Heart right ventricle (tissue), 16 donors: ENCODE measurements at regions of chr5 and their contacts with region 1.

Region 1: GRCh38 chr5:9544502-9545135 is 1.3 kb downstream of the SEMA5A start:
- DNase-seq: peak; percentile 85 to 87
- ATAC-seq: peak; percentile 73 to 86 (median 80)
- H3K4me3 ChIP-seq: peak overlapping the region; percentile 45 to 90 (median 73)
- H3K27ac ChIP-seq: peak overlapping the region; percentile 14 to 96 (median 80)
- H3K4me1 ChIP-seq: peaks cover 0 to 54% (median 21%) of the 10 kb centered on the region in 9 donors
- H3K27me3 ChIP-seq: peaks cover 0 to 46% (median 12%) of the 10 kb centered on the region in 7 donors
- CTCF ChIP-seq: peak; percentile 74 to 90 (median 80)

Region 2: GRCh38 chr5:9284781-9285307 is 259.8 kb before region 1 on chr5:
- intact Hi-C with region 1: loop called in 6 of 10 experiments (anchors 5 to 10 kb)
- DNase-seq: peak in 1 of 2 donors; percentile 32
- ATAC-seq: peak; percentile 73 to 92 (median 88)
- H3K4me3 ChIP-seq: peak overlapping the region in 1 of 10 donors; percentile 3
- H3K27ac ChIP-seq: peak overlapping the region; percentile 12 to 82 (median 59)
- H3K4me1 ChIP-seq: peaks cover 0 to 34% (median 18%) of the 10 kb centered on the region in 9 donors
- H3K27me3 ChIP-seq: no peaks in the 10 kb centered on the region
- CTCF ChIP-seq: no peak

Region 3: DNA sequence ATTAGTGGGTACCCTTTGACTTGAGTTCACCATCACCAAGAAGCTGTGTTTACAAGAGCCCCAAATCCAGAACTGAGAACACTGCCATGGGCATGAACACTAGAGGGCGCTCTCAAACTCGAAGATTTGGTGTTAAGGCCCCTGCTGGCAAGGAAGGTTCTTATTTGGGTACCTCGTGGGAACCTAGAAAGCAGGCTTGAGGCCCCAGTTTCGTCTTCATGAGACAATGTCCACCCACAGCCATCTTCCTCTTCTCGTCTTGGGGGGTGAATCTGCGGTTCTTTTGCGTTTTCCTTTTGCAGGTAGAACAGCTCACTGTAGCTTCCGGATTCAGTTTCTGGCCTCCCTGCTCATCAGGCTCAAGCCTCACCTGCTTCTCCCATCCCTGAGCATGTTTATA is 182.8 kb before region 1 on chr5:
- intact Hi-C with region 1: loop called in 9 of 10 experiments (anchors 1 to 10 kb)
- DNase-seq: peak in 1 of 2 donors; percentile 36
- ATAC-seq: peak in 5 of 8 donors; percentile 15 to 76 (median 44)
- H3K4me3 ChIP-seq: no peak overlapping the region
- H3K27ac ChIP-seq: peak overlapping the region in 1 of 10 donors; percentile 13
- H3K4me1 ChIP-seq: peaks cover 0 to 36% (median 24%) of the 10 kb centered on the region in 9 donors
- H3K27me3 ChIP-seq: no peaks in the 10 kb centered on the region
- CTCF ChIP-seq: peak; percentile 35 to 64 (median 57)

Region 4: DNA sequence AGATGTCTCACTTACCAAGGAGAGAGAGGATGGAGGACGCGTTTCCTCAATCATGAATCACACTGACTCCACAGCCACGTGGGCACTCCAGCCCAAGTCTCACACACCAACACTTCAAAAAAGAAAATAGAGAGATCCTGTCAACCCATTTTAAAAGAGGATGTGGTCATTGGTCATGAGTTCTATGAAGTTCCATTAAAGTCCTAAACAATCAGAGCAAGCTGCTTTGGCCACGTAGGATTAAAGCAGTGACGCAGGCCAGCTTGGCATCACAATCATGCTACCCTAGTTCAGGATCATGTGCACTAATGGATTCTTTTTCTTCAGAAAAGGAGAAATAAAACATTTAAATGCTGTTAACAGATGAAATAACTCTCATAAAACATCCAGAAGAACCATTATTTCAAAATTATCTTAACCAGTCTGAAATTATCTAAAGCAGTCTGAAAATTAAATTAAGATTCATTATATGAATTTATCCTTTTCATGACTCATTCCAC is 106.8 kb before region 1 on chr5:
- intact Hi-C with region 1: loop called in 1 of 10 experiments (anchors 10 kb)
- DNase-seq: no peak
- ATAC-seq: peak in 3 of 8 donors; percentile 33 to 39 (median 38)
- H3K4me3 ChIP-seq: no peak overlapping the region
- H3K27ac ChIP-seq: no peak overlapping the region
- H3K4me1 ChIP-seq: peaks cover 0 to 32% (median 14%) of the 10 kb centered on the region in 9 donors
- H3K27me3 ChIP-seq: no peaks in the 10 kb centered on the region
- CTCF ChIP-seq: no peak

Region 5: GRCh38 chr5:9498541-9499497 is 45.8 kb before region 1 on chr5:
- intact Hi-C with region 1: loop called in 1 of 10 experiments (anchors 5 kb)
- DNase-seq: no peak
- ATAC-seq: no peak
- H3K4me3 ChIP-seq: no peak overlapping the region
- H3K27ac ChIP-seq: peak overlapping the region in 1 of 10 donors; percentile 28
- H3K4me1 ChIP-seq: peaks cover 0 to 66% (median 34%) of the 10 kb centered on the region in 9 donors
- H3K27me3 ChIP-seq: no peaks in the 10 kb centered on the region
- CTCF ChIP-seq: peak in 7 of 9 donors; percentile 13 to 45 (median 30)